ENCODE measurements at regions of chr6 and their contacts with region 1.

Region 1: GRCh38 chr6:32522302-32523047 is 7.6 kb downstream of the HLA-DRB5 start:
- DNase-seq: no peak
- ATAC-seq: no peak
- H3K4me3 Mint-ChIP-seq: peak overlapping the region; percentile 61
- H3K27ac Mint-ChIP-seq: peak overlapping the region; percentile 70
- H3K4me1 Mint-ChIP-seq: peaks cover 36% of the 10 kb centered on the region
- H3K27me3 Mint-ChIP-seq: no peaks in the 10 kb centered on the region
- CTCF ChIP-seq: no peak

Region 2: GRCh38 chr6:32558426-32559057 is 36.1 kb after region 1 on chr6:
- CTCF ChIA-PET with region 1: interaction called, 6 read pairs
- POLR2A ChIA-PET with region 1: interaction called, 49 read pairs
- intact Hi-C with region 1: no loop called
- DNase-seq: no peak
- ATAC-seq: peak; percentile 54
- H3K4me3 Mint-ChIP-seq: peak overlapping the region; percentile 77
- H3K27ac Mint-ChIP-seq: peak overlapping the region; percentile 85
- H3K4me1 Mint-ChIP-seq: peaks cover 18% of the 10 kb centered on the region
- H3K27me3 Mint-ChIP-seq: no peaks in the 10 kb centered on the region
- CTCF ChIP-seq: no peak

Region 3: GRCh38 chr6:32581315-32582095 is 59.0 kb after region 1 on chr6:
- CTCF ChIA-PET with region 1: interaction called, 3 read pairs
- POLR2A ChIA-PET with region 1: interaction called, 180 read pairs
- intact Hi-C with region 1: no loop called
- DNase-seq: no peak
- ATAC-seq: peak; percentile 22
- H3K4me3 Mint-ChIP-seq: no peak overlapping the region
- H3K27ac Mint-ChIP-seq: peak overlapping the region; percentile 83
- H3K4me1 Mint-ChIP-seq: peaks cover 48% of the 10 kb centered on the region
- H3K27me3 Mint-ChIP-seq: no peaks in the 10 kb centered on the region
- CTCF ChIP-seq: no peak